ENCODE measurements at regions of chr9 and their contacts with region 1.

Region 1: DNA sequence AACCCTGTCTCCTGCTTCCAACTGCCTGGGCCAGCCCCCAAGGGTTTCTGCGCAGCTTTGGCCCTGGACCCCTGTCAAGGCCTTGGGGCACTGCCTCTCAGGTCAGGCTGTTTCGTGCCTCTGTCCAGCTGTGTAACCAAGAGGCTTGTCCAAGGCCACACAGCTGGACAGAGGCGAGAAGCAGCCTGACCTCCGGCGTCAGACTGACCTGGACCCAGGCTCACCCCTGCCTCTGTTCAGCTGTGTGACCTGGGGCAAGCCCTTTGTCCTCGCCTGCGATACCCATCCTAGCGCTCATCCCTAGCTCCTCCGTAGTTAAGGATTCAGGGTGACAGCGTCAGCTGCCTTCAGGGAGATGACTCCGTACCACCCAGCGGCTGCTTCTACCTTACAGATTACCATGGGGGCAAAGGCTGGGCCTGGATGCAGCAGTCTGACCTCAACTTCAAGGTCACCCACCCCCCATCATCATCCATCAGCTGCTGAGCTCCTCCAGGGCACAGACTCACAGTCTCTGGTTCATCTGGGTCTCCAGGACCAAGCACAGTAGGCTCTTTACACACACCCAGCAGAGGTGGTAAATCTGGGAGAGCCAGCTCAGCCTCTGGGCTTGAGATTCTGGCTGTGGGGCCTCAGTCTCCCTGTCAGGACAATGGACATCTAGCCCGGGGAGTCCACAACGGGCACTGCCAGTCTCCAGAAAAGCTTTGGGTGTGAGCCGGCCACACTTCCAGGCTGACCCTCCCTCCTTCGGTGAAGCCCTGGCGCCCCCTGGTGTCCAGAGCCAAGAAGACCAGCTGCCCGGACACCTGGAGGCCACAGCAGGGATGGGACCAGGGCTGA is 7.9 kb downstream of the AK1 start:
- DNase-seq: peak; percentile 78
- ATAC-seq: peak; percentile 85
- H3K4me3 ChIP-seq: no peak overlapping the region
- H3K27ac ChIP-seq: no peak overlapping the region
- H3K4me1 ChIP-seq: peaks cover 8% of the 10 kb centered on the region
- H3K27me3 ChIP-seq: no peaks in the 10 kb centered on the region
- CTCF ChIP-seq: peak; percentile 74

Region 2: GRCh38 chr9:126781186-126782052 is 1088.1 kb before region 1 on chr9:
- CTCF ChIA-PET with region 1: no interaction called
- POLR2A ChIA-PET with region 1: no interaction called
- intact Hi-C with region 1: no loop called
- DNase-seq: peak; percentile 85
- ATAC-seq: peak; percentile 88
- H3K4me3 ChIP-seq: peak overlapping the region; percentile 60; the same call in 1 of the 2 replicates
- H3K27ac ChIP-seq: no peak overlapping the region
- H3K4me1 ChIP-seq: no peaks in the 10 kb centered on the region
- H3K27me3 ChIP-seq: no peaks in the 10 kb centered on the region
- CTCF ChIP-seq: peak; percentile 84

Region 3: GRCh38 chr9:127785023-127785932 is 84.3 kb before region 1 on chr9:
- CTCF ChIA-PET with region 1: no interaction called
- POLR2A ChIA-PET with region 1: no interaction called
- intact Hi-C with region 1: loop called (anchors 2 kb)
- DNase-seq: peak; percentile 75
- ATAC-seq: peak; percentile 64
- H3K4me3 ChIP-seq: peak overlapping the region; percentile 81
- H3K27ac ChIP-seq: no peak overlapping the region
- H3K4me1 ChIP-seq: peaks cover 10% of the 10 kb centered on the region
- H3K27me3 ChIP-seq: no peaks in the 10 kb centered on the region
- CTCF ChIP-seq: peak; percentile 69

Region 4: GRCh38 chr9:127970401-127971313 is 101.1 kb after region 1 on chr9:
- CTCF ChIA-PET with region 1: no interaction called
- POLR2A ChIA-PET with region 1: no interaction called
- intact Hi-C with region 1: no loop called
- DNase-seq: peak; percentile 43
- ATAC-seq: peak; percentile 24; the same call in 1 of the 2 replicates
- H3K4me3 ChIP-seq: no peak overlapping the region
- H3K27ac ChIP-seq: no peak overlapping the region
- H3K4me1 ChIP-seq: peaks cover 48% of the 10 kb centered on the region
- H3K27me3 ChIP-seq: no peaks in the 10 kb centered on the region
- CTCF ChIP-seq: no peak

Region 5: GRCh38 chr9:128026773-128027541 is 157.4 kb after region 1 on chr9:
- CTCF ChIA-PET with region 1: no interaction called
- POLR2A ChIA-PET with region 1: no interaction called
- intact Hi-C with region 1: no loop called
- DNase-seq: no peak
- ATAC-seq: no peak
- H3K4me3 ChIP-seq: no peak overlapping the region
- H3K27ac ChIP-seq: no peak overlapping the region
- H3K4me1 ChIP-seq: peaks cover 4% of the 10 kb centered on the region; the same call in 1 of the 2 replicates
- H3K27me3 ChIP-seq: no peaks in the 10 kb centered on the region
- CTCF ChIP-seq: no peak

Region 6: GRCh38 chr9:128249908-128250838 is 380.6 kb after region 1 on chr9:
- CTCF ChIA-PET with region 1: no interaction called
- POLR2A ChIA-PET with region 1: no interaction called
- intact Hi-C with region 1: no loop called
- DNase-seq: peak; percentile 57
- ATAC-seq: peak; percentile 83
- H3K4me3 ChIP-seq: no peak overlapping the region
- H3K27ac ChIP-seq: no peak overlapping the region
- H3K4me1 ChIP-seq: no peaks in the 10 kb centered on the region
- H3K27me3 ChIP-seq: no peaks in the 10 kb centered on the region
- CTCF ChIP-seq: no peak

Measured in PC-3 (cell line).